Activated CD4-positive, alpha-beta T cell treated with anti-CD3 and anti-CD28 coated beads for 36 hours (primary cell): ENCODE measurements at regions of chr20 and their contacts with region 1.

Region 1: GRCh38 chr20:5674176-5674660 is 76.0 kb upstream of the SHLD1 start:
- DNase-seq: peak; percentile 42
- ATAC-seq: peak; percentile 93
- H3K4me3 Mint-ChIP-seq: no peak overlapping the region
- H3K27ac Mint-ChIP-seq: peak overlapping the region; percentile 76
- H3K4me1 Mint-ChIP-seq: peaks cover 14% of the 10 kb centered on the region
- H3K27me3 Mint-ChIP-seq: no peaks in the 10 kb centered on the region

Region 2: DNA sequence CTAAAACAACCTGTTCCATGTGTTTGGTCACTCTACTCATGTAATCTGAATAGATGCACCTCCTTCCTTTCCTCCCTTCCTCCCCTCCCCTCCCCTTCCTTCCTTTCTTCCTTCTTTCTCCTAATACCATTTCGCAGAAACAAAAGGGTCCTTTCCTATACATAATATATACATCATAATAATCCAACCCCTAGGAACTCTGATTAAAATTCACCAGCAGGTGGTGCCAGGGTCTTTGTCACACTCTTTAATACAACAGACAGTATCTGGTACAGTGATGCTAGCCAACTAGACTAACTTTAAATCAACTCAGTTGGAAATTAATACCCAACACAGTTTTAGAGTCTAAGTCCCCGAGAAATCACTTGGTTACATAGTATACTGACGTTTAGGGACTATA is 105.2 kb before region 1 on chr20:
- CTCF ChIA-PET with region 1: no interaction called
- POLR2A ChIA-PET with region 1: no interaction called
- intact Hi-C with region 1: no loop called
- DNase-seq: peak; percentile 68
- ATAC-seq: peak; percentile 89
- H3K4me3 Mint-ChIP-seq: no peak overlapping the region
- H3K27ac Mint-ChIP-seq: peak overlapping the region; percentile 23
- H3K4me1 Mint-ChIP-seq: peaks cover 36% of the 10 kb centered on the region
- H3K27me3 Mint-ChIP-seq: no peaks in the 10 kb centered on the region

Region 3: DNA sequence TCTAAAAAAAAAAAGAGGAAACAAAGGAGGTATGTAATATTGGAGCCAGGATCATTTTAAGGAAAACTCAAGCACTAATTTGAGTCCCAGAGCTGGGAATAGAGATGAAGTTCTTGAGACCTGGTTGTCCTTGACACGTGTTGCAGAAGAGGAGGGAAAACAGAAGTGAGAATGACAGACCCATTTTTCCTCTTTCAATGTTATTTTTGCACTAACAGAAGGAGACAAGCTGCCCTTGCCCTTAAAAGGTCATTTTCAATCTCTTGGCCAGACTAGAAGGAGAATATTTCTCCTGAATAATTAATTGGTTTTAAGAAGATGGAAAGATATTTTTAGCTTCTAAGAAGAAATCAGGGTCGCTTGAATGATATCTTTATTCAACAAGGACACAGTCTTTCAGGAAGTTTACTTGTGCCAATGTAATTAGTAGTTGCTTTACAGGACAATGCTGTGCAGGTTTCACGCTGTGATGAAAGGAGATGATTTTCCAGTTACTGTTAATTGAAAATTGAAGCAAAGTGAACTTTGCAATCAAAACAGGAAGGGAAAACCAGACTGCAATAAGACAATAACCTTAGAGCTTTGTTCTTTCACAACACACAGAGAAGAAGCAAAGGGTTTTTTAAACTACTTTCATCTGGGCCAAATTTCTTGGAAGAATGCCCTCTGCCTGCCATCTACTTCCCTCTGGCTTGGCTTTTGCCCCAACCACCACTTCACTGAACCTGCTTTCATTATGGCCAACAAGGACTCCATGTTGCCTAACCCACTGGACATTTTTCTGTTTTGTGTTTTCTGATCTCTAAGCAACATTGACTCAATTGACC is 31.9 kb before region 1 on chr20:
- CTCF ChIA-PET with region 1: no interaction called
- POLR2A ChIA-PET with region 1: interaction called, 5 read pairs
- intact Hi-C with region 1: loop called in 1 of 2 experiments (anchors 1 kb)
- DNase-seq: no peak
- ATAC-seq: no peak
- H3K4me3 Mint-ChIP-seq: no peak overlapping the region
- H3K27ac Mint-ChIP-seq: no peak overlapping the region
- H3K4me1 Mint-ChIP-seq: peaks cover 43% of the 10 kb centered on the region
- H3K27me3 Mint-ChIP-seq: no peaks in the 10 kb centered on the region

Region 4: GRCh38 chr20:5658912-5659345 is 15.3 kb before region 1 on chr20:
- CTCF ChIA-PET with region 1: no interaction called
- POLR2A ChIA-PET with region 1: interaction called, 4 read pairs
- intact Hi-C with region 1: loop called (anchors 1 kb)
- DNase-seq: peak; percentile 82
- ATAC-seq: peak; percentile 73
- H3K4me3 Mint-ChIP-seq: no peak overlapping the region
- H3K27ac Mint-ChIP-seq: peak overlapping the region; percentile 47
- H3K4me1 Mint-ChIP-seq: peaks cover 31% of the 10 kb centered on the region
- H3K27me3 Mint-ChIP-seq: no peaks in the 10 kb centered on the region

Region 5: GRCh38 chr20:5714261-5715041 is 40.2 kb after region 1 on chr20:
- CTCF ChIA-PET with region 1: no interaction called
- POLR2A ChIA-PET with region 1: no interaction called
- intact Hi-C with region 1: loop called (anchors 1 kb)
- DNase-seq: peak; percentile 69
- ATAC-seq: peak; percentile 93
- H3K4me3 Mint-ChIP-seq: no peak overlapping the region
- H3K27ac Mint-ChIP-seq: peak overlapping the region; percentile 82
- H3K4me1 Mint-ChIP-seq: peaks cover 34% of the 10 kb centered on the region
- H3K27me3 Mint-ChIP-seq: no peaks in the 10 kb centered on the region

Region 6: GRCh38 chr20:5737966-5738365 is 63.7 kb after region 1 on chr20:
- CTCF ChIA-PET with region 1: no interaction called
- POLR2A ChIA-PET with region 1: no interaction called
- intact Hi-C with region 1: loop called in 1 of 2 experiments (anchors 1 kb)
- DNase-seq: no peak
- ATAC-seq: peak; percentile 21
- H3K4me3 Mint-ChIP-seq: no peak overlapping the region
- H3K27ac Mint-ChIP-seq: peak overlapping the region; percentile 75
- H3K4me1 Mint-ChIP-seq: peaks cover 30% of the 10 kb centered on the region
- H3K27me3 Mint-ChIP-seq: no peaks in the 10 kb centered on the region

Region 7: GRCh38 chr20:6008254-6008653 is 334.0 kb after region 1 on chr20:
- CTCF ChIA-PET with region 1: no interaction called
- POLR2A ChIA-PET with region 1: no interaction called
- intact Hi-C with region 1: no loop called
- DNase-seq: peak; percentile 27
- ATAC-seq: no peak
- H3K4me3 Mint-ChIP-seq: peak overlapping the region; percentile 96
- H3K27ac Mint-ChIP-seq: no peak overlapping the region
- H3K4me1 Mint-ChIP-seq: peaks cover 34% of the 10 kb centered on the region
- H3K27me3 Mint-ChIP-seq: no peaks in the 10 kb centered on the region